Prostate gland (tissue), 2 donors: ENCODE measurements at regions of chr4 and their contacts with region 1.

Region 1: DNA sequence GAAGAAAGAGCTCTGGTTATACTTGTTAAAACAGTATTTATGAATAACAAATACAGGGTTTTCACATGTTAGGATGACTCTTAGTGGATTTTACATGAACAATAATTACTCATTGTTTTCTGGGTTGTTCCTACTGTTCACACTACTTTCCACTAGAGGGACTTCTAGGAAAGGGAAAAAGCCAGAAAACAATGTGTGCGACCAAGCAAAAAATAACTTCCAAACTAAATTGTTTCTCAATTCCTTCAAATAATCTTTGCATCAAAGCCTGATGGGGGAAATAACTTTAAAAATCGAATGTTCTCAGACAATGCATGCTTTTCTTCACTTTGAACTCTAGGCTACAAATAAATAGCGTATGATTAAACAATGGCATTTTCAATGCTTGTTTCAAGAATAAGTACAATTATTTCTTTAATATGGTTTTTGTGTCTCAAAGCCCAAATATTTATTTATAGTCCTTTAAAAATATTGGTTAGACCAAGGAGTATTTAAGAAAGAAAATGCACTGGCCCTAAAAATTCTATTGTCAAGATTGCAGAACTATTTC is 72.1 kb upstream of the ETNPPL start:
- DNase-seq: no peak
- H3K4me3 ChIP-seq: no peak overlapping the region
- H3K27ac ChIP-seq: no peak overlapping the region
- H3K4me1 ChIP-seq: peaks cover 3% of the 10 kb centered on the region
- H3K27me3 ChIP-seq: no peaks in the 10 kb centered on the region
- CTCF ChIP-seq: peak; percentile 19 to 75 (median 54)
- POLR2A ChIP-seq: no peak

Region 2: DNA sequence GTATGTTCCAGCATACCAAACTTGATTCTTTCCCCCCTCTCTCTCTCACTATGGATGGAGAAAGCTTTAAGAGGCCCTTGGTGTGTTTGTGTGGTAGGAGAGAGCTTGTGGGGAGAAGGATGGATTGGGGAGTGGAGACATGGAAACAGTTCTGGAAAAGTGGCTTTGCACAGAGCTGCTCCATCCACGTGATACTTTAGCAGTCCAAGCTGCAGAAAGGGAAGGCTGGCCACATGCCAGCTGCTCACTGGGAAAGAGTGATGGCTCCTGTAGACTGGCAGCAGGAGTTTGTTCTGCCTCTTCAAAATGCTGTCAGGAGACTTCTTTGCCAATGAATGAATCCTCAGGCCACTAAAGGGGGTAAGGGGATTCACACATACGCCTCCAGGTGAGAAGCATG is 577.1 kb after region 1 on chr4:
- intact Hi-C with region 1: loop called (anchors 5 kb)
- DNase-seq: no peak
- H3K4me3 ChIP-seq: no peak overlapping the region
- H3K27ac ChIP-seq: no peak overlapping the region
- H3K4me1 ChIP-seq: no peaks in the 10 kb centered on the region
- H3K27me3 ChIP-seq: no peaks in the 10 kb centered on the region
- CTCF ChIP-seq: no peak
- POLR2A ChIP-seq: no peak